Cardiac septum (tissue), 1 donor: ENCODE measurements at regions of chr15 and their contacts with region 1.

Region 1: GRCh38 chr15:90265271-90266060 is at the start of gene NGRN:
- DNase-seq: peak; percentile 99
- total RNA-seq, gene NGRN: 111 TPM

Region 2: DNA sequence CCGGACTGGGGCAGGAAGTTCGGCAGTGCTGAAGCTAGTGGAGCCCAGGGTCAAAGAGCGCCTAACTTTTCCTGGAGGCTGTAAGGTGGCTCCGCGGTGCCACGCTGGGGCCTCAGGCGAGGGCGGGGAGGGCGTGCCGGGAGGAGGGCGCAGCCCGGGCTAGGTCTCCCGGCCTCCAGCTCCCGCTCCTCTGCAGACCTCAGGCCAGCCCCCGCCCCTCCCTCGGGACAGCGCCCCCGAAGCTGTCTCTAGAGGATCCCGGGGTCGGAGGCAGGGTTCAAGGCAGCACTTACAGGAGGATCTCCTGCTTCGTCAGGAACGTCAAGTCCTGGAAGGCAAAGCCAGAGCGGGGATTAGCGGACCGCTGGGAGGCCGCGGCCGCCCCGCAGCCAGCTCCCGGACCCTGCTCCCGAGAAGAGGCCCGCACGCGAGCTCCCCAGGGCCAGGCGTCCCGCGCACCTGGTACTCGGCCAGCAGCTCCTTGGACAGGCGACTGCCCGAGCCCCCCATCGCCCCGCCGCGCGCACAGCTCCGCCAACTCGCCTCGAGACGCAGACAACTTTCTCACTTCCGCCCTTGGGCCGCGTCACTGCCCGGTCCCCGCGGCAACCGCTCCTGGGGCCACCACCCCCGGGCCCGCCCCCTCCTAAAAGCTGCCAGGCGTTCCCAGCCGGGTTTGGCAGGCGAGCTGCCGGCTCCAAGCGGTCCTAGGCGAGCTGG is 31.9 kb before region 1 on chr15 and contains the start of gene CIB1:
- intact Hi-C with region 1: loop called (anchors 5 kb)
- DNase-seq: peak; percentile 99
- total RNA-seq, gene CIB1: 69.9 TPM